GM10248 (cell line): ENCODE measurements at regions of chr12 and their contacts with region 1.

Region 1: GRCh38 chr12:24814379-24815113 is 134.4 kb downstream of the BCAT1 start:
- DNase-seq: peak; percentile 11
- CTCF ChIP-seq: no peak

Region 2: GRCh38 chr12:24803430-24804245 is 10.9 kb before region 1 on chr12:
- CTCF ChIA-PET with region 1: interaction called, 11 read pairs
- POLR2A ChIA-PET with region 1: no interaction called
- DNase-seq: no peak
- CTCF ChIP-seq: no peak